Activated CD4-positive, alpha-beta memory T cell treated with anti-CD3 and anti-CD28 coated beads, Interleukin-2, amount 10 ng/mL, durations not matched to agents 7 days and 5 days (primary cell): ENCODE measurements at regions of chr16 and their contacts with region 1.

Region 1: DNA sequence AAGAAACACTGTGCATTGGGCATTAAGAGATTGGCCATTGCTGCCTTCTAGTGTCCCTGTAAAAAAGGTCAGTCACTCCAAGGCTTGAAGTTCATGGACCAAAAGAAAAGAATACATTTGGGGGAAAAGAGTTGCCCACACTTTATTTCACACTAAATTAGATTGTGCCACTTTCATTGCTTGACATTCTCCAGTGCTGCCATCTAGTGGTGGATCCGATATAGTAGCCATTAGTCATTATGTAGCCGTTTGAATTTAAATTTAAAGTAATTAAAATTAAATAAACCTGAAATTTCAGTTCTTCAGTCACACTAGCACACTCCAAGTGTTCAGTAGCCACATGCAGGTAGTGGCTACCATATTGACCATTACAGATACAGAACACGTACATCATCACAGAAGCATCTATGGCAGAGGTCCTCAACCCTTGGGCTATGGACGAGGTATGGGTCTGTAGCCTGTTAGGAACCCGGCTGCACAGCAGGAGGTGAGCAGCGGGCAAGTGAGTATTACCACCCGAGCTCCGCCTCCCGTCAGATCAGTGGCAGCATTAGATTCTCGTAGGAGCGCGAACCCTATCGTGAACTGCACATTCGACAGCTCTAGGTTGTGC is 21.9 kb upstream of the CDH5 start:
- DNase-seq: no peak
- H3K4me3 Mint-ChIP-seq: no peak overlapping the region
- H3K27ac Mint-ChIP-seq: no peak overlapping the region
- H3K4me1 Mint-ChIP-seq: no peaks in the 10 kb centered on the region
- H3K27me3 Mint-ChIP-seq: peaks cover 12% of the 10 kb centered on the region

Region 2: DNA sequence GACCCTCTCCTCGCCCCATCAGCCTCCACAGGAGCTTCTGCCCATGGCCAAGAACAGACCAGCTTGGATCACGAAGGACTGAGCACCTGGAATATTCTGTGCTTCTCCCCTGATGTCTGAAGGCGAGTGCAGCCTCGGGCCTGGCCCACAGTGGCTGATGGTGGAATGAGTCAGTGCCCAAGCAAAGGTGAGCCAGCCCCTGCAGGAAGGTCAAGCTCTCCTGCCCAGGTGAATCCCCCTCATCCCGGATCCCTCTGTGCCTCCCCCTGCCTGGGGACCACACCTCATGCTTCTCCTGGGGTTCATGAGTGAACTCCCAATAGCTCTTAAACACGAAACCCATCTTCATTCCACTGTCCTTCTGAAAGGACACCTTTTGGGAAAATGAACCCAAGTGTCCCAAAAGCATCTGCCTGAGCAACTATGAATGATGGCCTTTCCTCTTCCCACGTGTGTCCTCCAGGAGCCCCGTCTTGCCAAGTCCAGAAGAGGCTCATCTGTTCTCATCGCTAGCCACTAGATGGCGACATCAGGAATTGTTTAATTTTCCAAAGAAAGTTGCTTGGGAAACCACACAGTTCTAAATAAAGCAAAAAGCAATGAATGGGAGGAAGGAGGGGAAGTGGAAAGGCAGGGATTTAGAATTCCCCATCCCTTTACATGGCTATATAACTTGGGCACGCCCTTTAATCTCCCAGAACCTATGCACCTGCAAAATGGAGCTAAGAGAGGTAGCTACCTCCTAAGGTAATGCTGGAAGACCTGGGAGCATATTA is 12.7 kb after region 1 on chr16:
- CTCF ChIA-PET with region 1: interaction called, 21 read pairs
- POLR2A ChIA-PET with region 1: no interaction called
- DNase-seq: no peak
- H3K4me3 Mint-ChIP-seq: no peak overlapping the region
- H3K27ac Mint-ChIP-seq: no peak overlapping the region
- H3K4me1 Mint-ChIP-seq: peaks cover 6% of the 10 kb centered on the region
- H3K27me3 Mint-ChIP-seq: peaks cover 48% of the 10 kb centered on the region